Calu3 (cell line): ENCODE measurements at regions of chr6 and their contacts with region 1.

Region 1: GRCh38 chr6:84466511-84466910 is 239.1 kb upstream of the CEP162 start:
- DNase-seq: peak; percentile 82
- H3K4me3 Mint-ChIP-seq: no peak overlapping the region
- H3K27ac Mint-ChIP-seq: peak overlapping the region; percentile 75
- H3K4me1 Mint-ChIP-seq: peaks cover 48% of the 10 kb centered on the region
- H3K27me3 Mint-ChIP-seq: no peaks in the 10 kb centered on the region
- CTCF ChIP-seq: no peak

Region 2: GRCh38 chr6:84428300-84428907 is 38.1 kb before region 1 on chr6:
- CTCF ChIA-PET with region 1: no interaction called
- intact Hi-C with region 1: loop called (anchors 2 kb)
- DNase-seq: peak; percentile 71
- H3K4me3 Mint-ChIP-seq: no peak overlapping the region
- H3K27ac Mint-ChIP-seq: no peak overlapping the region
- H3K4me1 Mint-ChIP-seq: peaks cover 9% of the 10 kb centered on the region
- H3K27me3 Mint-ChIP-seq: no peaks in the 10 kb centered on the region
- CTCF ChIP-seq: peak; percentile 78

Region 3: GRCh38 chr6:84546427-84546914 is 80.0 kb after region 1 on chr6:
- CTCF ChIA-PET with region 1: no interaction called
- intact Hi-C with region 1: loop called (anchors 2 kb)
- DNase-seq: peak; percentile 5
- H3K4me3 Mint-ChIP-seq: no peak overlapping the region
- H3K27ac Mint-ChIP-seq: no peak overlapping the region
- H3K4me1 Mint-ChIP-seq: peaks cover 20% of the 10 kb centered on the region
- H3K27me3 Mint-ChIP-seq: peaks cover 15% of the 10 kb centered on the region
- CTCF ChIP-seq: no peak

Region 4: DNA sequence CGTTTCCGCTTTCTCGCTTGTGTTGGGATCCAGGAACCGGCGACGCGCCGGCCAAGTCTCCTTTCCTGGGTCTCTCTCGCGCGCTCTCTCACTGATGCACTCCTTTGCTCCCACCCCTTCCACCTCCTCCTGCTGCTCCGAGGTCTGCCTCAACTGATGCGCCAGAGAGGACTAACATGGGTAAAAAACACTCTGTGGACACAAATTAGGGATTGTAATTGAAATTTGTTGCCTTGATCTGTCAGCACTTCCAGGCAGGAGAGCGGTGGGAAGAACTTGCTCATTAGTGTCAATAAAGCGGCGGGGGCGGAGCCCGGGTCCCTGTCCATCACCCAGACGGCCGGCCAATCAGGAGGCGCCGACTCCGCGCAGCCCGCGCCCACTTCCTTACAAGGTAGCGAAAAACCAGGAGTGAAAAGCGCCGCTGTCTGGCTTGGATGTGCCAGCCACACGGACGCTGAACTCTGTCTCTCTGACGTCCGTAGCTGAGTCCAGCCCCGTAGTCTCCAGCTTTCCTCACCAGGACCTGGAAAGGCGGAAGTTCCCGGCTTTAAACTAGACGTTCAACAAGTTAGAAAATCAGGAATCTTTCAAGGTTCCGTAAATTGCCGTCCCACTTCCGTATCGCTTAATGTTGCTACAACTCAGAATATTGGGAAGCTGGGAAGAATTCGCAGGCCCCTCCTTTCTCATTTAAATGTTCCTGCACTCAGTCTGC is 298.0 kb after region 1 on chr6 and contains the start of gene TBX18:
- CTCF ChIA-PET with region 1: no interaction called
- intact Hi-C with region 1: loop called (anchors 5 kb)
- DNase-seq: peak; percentile 93
- H3K4me3 Mint-ChIP-seq: peak within 1 kb of the TSS; percentile 70
- H3K27ac Mint-ChIP-seq: peak within 1 kb of the TSS; percentile 92
- H3K4me1 Mint-ChIP-seq: peaks cover 14% of the 10 kb centered on the region
- H3K27me3 Mint-ChIP-seq: no peaks in the 10 kb centered on the region
- CTCF ChIP-seq: no peak
- total RNA-seq, gene TBX18: 48.5 and 49.2 TPM in 2 replicates